IMR-90 (cell line): ENCODE measurements at regions of chr18 and their contacts with region 1.

Region 1: DNA sequence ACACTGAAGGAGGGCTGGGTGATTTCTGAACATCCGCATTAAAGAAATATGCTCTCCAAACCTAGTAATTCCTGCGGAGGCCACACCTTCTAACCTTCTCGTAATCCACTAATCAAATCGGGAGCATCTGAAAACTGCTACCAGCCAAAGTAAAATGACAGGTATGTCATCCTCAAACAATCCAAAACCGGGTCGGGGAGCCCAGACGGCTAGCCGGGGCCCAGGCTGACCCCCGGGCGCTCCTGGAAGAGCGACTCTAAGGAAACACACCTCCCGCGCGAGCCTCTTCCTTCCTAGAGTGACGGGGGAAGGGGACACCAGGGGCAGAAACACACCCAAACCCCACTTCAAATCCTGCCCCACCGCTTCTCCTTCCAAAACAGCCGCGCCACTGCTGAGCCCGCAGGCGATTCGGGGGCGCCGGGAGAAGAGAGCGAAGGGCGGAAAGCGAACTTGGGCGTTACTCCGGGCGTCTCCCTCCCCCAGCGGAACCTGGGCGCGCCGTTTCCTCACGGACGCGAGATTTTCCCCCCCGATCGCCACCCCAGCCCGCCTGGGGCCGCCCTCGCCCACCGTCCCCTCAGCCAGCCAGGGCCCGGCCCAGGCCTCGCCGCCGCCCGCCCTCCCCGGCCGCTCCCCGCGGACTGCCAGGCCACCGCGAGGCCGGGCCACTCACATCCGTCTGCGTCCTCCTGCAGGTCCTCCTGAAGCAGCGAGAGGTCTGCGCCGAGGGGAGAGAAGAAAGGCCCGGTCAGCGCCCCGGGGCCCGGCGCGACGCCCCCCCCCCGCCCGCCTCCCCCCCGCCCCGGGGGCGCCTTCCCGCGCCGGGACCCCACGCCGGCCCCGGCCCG is 584 bp downstream of the PPP4R1 start:
- DNase-seq: peak; percentile 27
- ATAC-seq: peak; percentile 44
- H3K4me3 ChIP-seq: peak overlapping the region; percentile 81
- H3K27ac ChIP-seq: peak overlapping the region; percentile 70
- H3K4me1 ChIP-seq: peaks cover 19% of the 10 kb centered on the region
- H3K27me3 ChIP-seq: no peaks in the 10 kb centered on the region
- CTCF ChIP-seq: no peak
- POLR2A ChIP-seq: peak; percentile 37; the same call in 1 of the 2 replicates
- RAD21 ChIP-seq: no peak

Region 2: GRCh38 chr18:9673296-9674251 is 59.8 kb after region 1 on chr18:
- CTCF ChIA-PET with region 1: no interaction called
- POLR2A ChIA-PET with region 1: no interaction called
- dilution Hi-C with region 1: no loop called
- in situ Hi-C with region 1: no loop called
- intact Hi-C with region 1: loop called (anchors 1 kb)
- DNase-seq: peak; percentile 58
- ATAC-seq: peak; percentile 92
- H3K4me3 ChIP-seq: no peak overlapping the region
- H3K27ac ChIP-seq: no peak overlapping the region
- H3K4me1 ChIP-seq: no peaks in the 10 kb centered on the region
- H3K27me3 ChIP-seq: no peaks in the 10 kb centered on the region
- CTCF ChIP-seq: peak; percentile 49
- POLR2A ChIP-seq: no peak
- RAD21 ChIP-seq: peak; percentile 53

Region 3: DNA sequence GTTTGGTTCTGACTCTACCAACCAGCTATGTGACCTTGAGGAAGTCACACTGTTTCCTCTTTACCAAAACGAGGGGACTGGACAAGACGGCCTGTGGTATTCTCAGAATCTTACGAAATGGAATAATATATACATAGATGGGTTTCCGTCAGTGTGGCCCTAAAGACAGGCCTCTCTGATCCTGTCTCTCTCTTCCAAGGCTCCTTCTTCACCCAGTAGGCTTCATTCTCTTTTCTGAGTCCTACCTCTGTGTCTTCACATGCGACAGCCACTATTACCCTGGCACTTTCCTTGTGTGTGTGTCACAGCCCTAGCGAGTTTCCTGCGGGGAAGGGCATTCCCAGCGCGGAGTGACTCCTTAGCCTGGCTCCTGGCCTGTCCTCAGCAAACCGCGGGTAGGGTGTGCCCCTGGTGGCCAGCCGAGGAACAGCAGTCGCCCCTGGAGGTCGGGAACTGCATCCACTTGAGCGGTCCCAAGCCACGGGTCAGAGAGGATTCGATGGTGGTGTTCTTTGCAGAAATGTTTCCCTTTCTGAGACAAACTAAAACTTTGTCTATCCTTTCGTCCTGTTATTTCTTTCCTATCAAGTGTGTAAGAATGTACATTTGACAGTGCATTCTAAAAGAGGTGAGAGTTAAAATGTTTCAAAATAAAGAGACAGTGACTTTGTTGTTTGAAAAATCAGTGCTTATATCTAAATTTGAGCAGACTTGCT is 157.6 kb after region 1 on chr18:
- CTCF ChIA-PET with region 1: no interaction called
- POLR2A ChIA-PET with region 1: no interaction called
- dilution Hi-C with region 1: no loop called
- in situ Hi-C with region 1: no loop called
- intact Hi-C with region 1: loop called (anchors 2 kb)
- DNase-seq: peak; percentile 57
- ATAC-seq: peak; percentile 96
- H3K4me3 ChIP-seq: no peak overlapping the region
- H3K27ac ChIP-seq: no peak overlapping the region
- H3K4me1 ChIP-seq: no peaks in the 10 kb centered on the region
- H3K27me3 ChIP-seq: no peaks in the 10 kb centered on the region
- CTCF ChIP-seq: peak; percentile 75
- POLR2A ChIP-seq: no peak
- RAD21 ChIP-seq: peak; percentile 86

Region 4: GRCh38 chr18:9951022-9951859 is 337.5 kb after region 1 on chr18:
- CTCF ChIA-PET with region 1: no interaction called
- POLR2A ChIA-PET with region 1: no interaction called
- dilution Hi-C with region 1: no loop called
- in situ Hi-C with region 1: no loop called
- intact Hi-C with region 1: loop called (anchors 2 kb)
- DNase-seq: peak; percentile 79
- ATAC-seq: peak; percentile 85
- H3K4me3 ChIP-seq: no peak overlapping the region
- H3K27ac ChIP-seq: no peak overlapping the region
- H3K4me1 ChIP-seq: peaks cover under 1% of the 10 kb centered on the region; the same call in 1 of the 2 replicates
- H3K27me3 ChIP-seq: no peaks in the 10 kb centered on the region
- CTCF ChIP-seq: peak; percentile 70
- POLR2A ChIP-seq: no peak
- RAD21 ChIP-seq: peak; percentile 76